CD4-positive, alpha-beta memory T cell (primary cell): ENCODE measurements at regions of chr14 and their contacts with region 1.

Region 1: DNA sequence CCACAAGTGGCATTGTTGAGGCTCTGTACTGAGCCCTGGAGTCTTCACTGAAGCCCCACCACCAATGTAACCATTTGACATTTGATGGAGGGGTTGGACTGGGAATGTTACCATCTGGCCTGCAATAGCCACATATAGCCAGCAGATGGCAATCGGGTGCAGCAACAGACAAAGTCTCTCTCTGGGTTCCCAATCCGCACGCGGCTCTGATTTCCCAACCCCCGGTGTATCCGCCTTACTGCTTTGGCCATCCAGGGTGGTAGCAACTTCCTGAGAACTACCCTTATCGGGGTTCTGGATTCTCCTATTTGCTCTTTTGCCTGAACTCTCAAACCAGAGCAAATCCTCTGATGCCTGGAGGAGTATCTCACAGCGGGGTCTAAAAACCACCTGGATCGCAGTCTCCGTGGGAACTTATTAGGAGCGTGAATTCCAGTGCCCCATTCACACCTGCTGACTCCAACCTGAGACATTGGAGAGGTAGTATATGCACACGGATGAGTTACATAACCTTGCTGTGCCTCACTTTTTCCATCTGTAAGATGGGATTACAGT is 14.2 kb downstream of the VRTN start:
- DNase-seq: peak; percentile 54 to 59 (median 57)
- H3K4me3 ChIP-seq: no peak overlapping the region
- H3K4me3 Mint-ChIP-seq: no peak overlapping the region
- H3K27ac ChIP-seq: no peak overlapping the region
- H3K27ac Mint-ChIP-seq: peak overlapping the region in 1 of 7 donors; percentile 3
- H3K4me1 ChIP-seq: no peaks in the 10 kb centered on the region
- H3K4me1 Mint-ChIP-seq: no peaks in the 10 kb centered on the region
- H3K27me3 ChIP-seq: peaks cover 5% of the 10 kb centered on the region
- H3K27me3 Mint-ChIP-seq: peaks cover 3 to 8% of the 10 kb centered on the region in 2 donors

Region 2: GRCh38 chr14:74391479-74391878 is 29.0 kb after region 1 on chr14:
- CTCF ChIA-PET with region 1: no interaction called
- POLR2A ChIA-PET with region 1: no interaction called
- intact Hi-C with region 1: no loop called
- DNase-seq: no peak
- H3K4me3 ChIP-seq: no peak overlapping the region
- H3K4me3 Mint-ChIP-seq: no peak overlapping the region
- H3K27ac ChIP-seq: no peak overlapping the region
- H3K27ac Mint-ChIP-seq: no peak overlapping the region
- H3K4me1 ChIP-seq: no peaks in the 10 kb centered on the region
- H3K4me1 Mint-ChIP-seq: no peaks in the 10 kb centered on the region
- H3K27me3 ChIP-seq: no peaks in the 10 kb centered on the region
- H3K27me3 Mint-ChIP-seq: peaks cover 13 to 17% of the 10 kb centered on the region in 2 donors

Region 3: DNA sequence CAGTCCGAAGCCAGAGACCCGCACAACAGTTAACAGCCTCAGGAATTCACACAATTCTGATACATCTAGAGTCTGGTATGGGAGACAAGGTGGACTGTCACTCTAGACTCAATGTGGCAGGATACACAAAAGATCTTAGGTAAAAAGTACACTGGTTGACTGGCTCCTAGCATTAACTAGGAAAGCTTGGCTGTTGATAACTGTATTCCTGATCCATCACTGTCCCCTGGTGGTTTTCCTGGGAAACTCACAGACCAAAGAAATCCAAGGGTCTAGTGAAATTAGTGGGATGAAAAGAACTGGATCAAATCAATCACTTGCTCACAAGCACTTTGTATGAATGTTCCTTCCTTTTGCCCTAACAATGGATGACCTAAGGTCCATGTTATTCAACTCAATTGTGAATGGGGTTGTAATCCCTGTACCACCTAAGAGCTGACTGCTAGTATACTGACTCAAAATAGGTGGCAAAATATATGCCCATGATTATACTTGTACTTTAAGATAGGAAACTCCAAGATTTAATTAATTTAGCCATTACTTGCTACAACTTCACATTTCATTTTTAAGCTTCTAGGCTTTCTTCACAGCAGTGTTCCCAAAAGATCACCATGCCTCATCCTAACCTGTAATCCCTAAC is 116.7 kb after region 1 on chr14:
- CTCF ChIA-PET with region 1: interaction called, 9 read pairs
- POLR2A ChIA-PET with region 1: no interaction called
- intact Hi-C with region 1: loop called (anchors 1 kb)
- DNase-seq: no peak
- H3K4me3 ChIP-seq: no peak overlapping the region
- H3K4me3 Mint-ChIP-seq: no peak overlapping the region
- H3K27ac ChIP-seq: no peak overlapping the region
- H3K27ac Mint-ChIP-seq: no peak overlapping the region
- H3K4me1 ChIP-seq: no peaks in the 10 kb centered on the region
- H3K4me1 Mint-ChIP-seq: no peaks in the 10 kb centered on the region
- H3K27me3 ChIP-seq: no peaks in the 10 kb centered on the region
- H3K27me3 Mint-ChIP-seq: no peaks in the 10 kb centered on the region